Transverse colon (tissue), 4 donors: ENCODE measurements at regions of chr11 and their contacts with region 1.

Region 1: DNA sequence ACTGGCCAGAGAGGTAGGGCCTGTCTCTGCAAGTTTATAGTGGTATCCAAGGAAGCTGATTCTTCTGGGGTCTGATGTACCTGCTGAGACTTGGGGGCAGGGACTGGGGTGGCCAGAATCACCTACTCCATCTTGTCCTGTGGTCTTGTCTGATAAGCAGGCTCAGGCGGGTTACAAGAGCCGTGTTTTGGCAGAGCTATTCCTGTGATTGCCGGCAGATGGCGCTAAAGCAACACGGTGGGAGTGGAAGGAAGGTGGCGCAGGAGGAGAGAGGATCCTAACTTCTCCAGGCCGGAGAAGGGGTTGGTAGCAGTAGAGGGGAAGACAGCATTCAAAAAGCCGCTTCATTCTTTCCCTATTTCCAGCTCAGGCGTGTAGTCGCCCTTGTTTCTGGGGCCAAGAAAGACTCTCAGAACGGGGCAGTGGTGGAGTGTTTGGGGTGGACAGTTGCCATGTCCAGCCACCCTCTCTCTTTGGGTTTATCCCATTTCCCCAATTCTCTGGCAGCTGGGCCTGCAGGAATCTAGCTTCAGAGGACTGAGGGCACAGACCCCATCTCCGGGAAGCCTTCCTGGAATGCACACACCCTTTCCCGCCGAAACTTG is 15.1 kb downstream of the CHRM1 start:
- DNase-seq: peak; percentile 86
- H3K4me3 ChIP-seq: no peak overlapping the region
- H3K27ac ChIP-seq: no peak overlapping the region
- H3K4me1 ChIP-seq: peaks cover 8 to 17% (median 13%) of the 10 kb centered on the region in 4 donors
- H3K27me3 ChIP-seq: no peaks in the 10 kb centered on the region
- CTCF ChIP-seq: peak; percentile 97 to 99 (median 98)
- EP300 ChIP-seq: no peak
- POLR2A ChIP-seq: no peak

Region 2: GRCh38 chr11:62863687-62864180 is 42.3 kb before region 1 on chr11:
- in situ Hi-C with region 1: no loop called
- intact Hi-C with region 1: no loop called
- DNase-seq: no peak
- H3K4me3 ChIP-seq: no peak overlapping the region
- H3K27ac ChIP-seq: no peak overlapping the region
- H3K4me1 ChIP-seq: peaks cover 0 to 7% (median 2%) of the 10 kb centered on the region in 4 donors
- H3K27me3 ChIP-seq: no peaks in the 10 kb centered on the region
- CTCF ChIP-seq: no peak
- EP300 ChIP-seq: no peak
- POLR2A ChIP-seq: no peak

Region 3: GRCh38 chr11:62965574-62965973 is 59.5 kb after region 1 on chr11:
- in situ Hi-C with region 1: no loop called
- intact Hi-C with region 1: no loop called
- DNase-seq: no peak
- H3K4me3 ChIP-seq: no peak overlapping the region
- H3K27ac ChIP-seq: no peak overlapping the region
- H3K4me1 ChIP-seq: no peaks in the 10 kb centered on the region
- H3K27me3 ChIP-seq: peaks cover 8% of the 10 kb centered on the region
- CTCF ChIP-seq: no peak
- EP300 ChIP-seq: no peak
- POLR2A ChIP-seq: no peak

Region 4: GRCh38 chr11:63023841-63024648 is 118.0 kb after region 1 on chr11:
- in situ Hi-C with region 1: loop called (anchors 5 kb)
- intact Hi-C with region 1: loop called (anchors 1 kb)
- DNase-seq: peak; percentile 88
- H3K4me3 ChIP-seq: no peak overlapping the region
- H3K27ac ChIP-seq: no peak overlapping the region
- H3K4me1 ChIP-seq: peaks cover 0 to 5% (median 4%) of the 10 kb centered on the region in 4 donors
- H3K27me3 ChIP-seq: no peaks in the 10 kb centered on the region
- CTCF ChIP-seq: peak; percentile 98 to 100 (median 99)
- EP300 ChIP-seq: no peak
- POLR2A ChIP-seq: no peak

Region 5: GRCh38 chr11:63212742-63213141 is 306.7 kb after region 1 on chr11:
- in situ Hi-C with region 1: loop called in 3 of 4 experiments (anchors 25 kb)
- intact Hi-C with region 1: no loop called
- DNase-seq: no peak
- H3K4me3 ChIP-seq: no peak overlapping the region
- H3K27ac ChIP-seq: no peak overlapping the region
- H3K4me1 ChIP-seq: no peaks in the 10 kb centered on the region
- H3K27me3 ChIP-seq: peaks cover 6% of the 10 kb centered on the region
- CTCF ChIP-seq: peak; percentile 26 to 57 (median 43)
- EP300 ChIP-seq: no peak
- POLR2A ChIP-seq: no peak